PC-9 (cell line): ENCODE measurements at regions of chr1 and their contacts with region 1.

Region 1: GRCh38 chr1:171530676-171531075 is 45.3 kb downstream of the PRRC2C start:
- DNase-seq: no peak
- H3K4me3 ChIP-seq: no peak overlapping the region
- H3K27ac ChIP-seq: no peak overlapping the region
- H3K4me1 ChIP-seq: no peaks in the 10 kb centered on the region
- H3K27me3 ChIP-seq: no peaks in the 10 kb centered on the region
- CTCF ChIP-seq: no peak

Region 2: DNA sequence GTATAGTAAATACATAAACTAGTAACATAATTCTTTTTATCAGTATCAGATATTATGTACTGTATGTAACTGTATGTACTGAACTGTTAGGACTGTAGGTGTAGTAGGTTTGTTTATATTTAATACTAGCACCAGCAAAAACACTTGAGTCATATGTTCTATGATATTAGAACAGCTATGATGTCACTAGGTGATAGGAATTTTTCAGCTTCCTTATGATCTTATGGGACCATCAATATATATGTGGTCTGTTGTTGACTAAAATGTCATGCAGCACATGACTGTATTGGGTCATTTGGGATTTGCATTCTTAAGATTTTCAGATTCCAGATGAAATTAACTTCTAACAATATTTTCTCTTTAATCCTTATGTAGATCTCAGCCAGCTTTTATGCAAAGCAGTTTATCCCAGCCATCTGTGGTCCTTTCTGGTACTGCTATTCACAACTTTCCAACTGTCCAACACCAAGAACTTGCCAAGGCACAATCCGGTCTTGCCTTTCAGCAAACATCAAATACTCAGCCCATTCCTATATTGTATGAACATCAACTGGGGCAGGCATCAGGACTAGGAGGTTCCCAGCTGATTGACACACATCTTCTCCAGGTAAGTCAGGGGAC is 53.0 kb after region 1 on chr1:
- CTCF ChIA-PET with region 1: no interaction called
- POLR2A ChIA-PET with region 1: interaction called, 5 read pairs
- intact Hi-C with region 1: loop called (anchors 5 kb)
- DNase-seq: no peak
- H3K4me3 ChIP-seq: no peak overlapping the region
- H3K27ac ChIP-seq: no peak overlapping the region
- H3K4me1 ChIP-seq: no peaks in the 10 kb centered on the region
- H3K27me3 ChIP-seq: no peaks in the 10 kb centered on the region
- CTCF ChIP-seq: no peak